Natural killer cell (primary cell): ENCODE measurements at regions of chr4 and their contacts with region 1.

Region 1: GRCh38 chr4:1746265-1746691 is 25.0 kb downstream of the TACC3 start:
- DNase-seq: peak; percentile 66 to 81
- ATAC-seq: peak; percentile 54 to 83 (median 83)
- H3K4me3 ChIP-seq: no peak overlapping the region
- H3K4me3 Mint-ChIP-seq: no peak overlapping the region
- H3K27ac ChIP-seq: no peak overlapping the region
- H3K27ac Mint-ChIP-seq: no peak overlapping the region
- H3K4me1 ChIP-seq: peaks cover 10% of the 10 kb centered on the region
- H3K4me1 Mint-ChIP-seq: no peaks in the 10 kb centered on the region
- H3K27me3 ChIP-seq: no peaks in the 10 kb centered on the region
- H3K27me3 Mint-ChIP-seq: no peaks in the 10 kb centered on the region
- CTCF ChIP-seq: peak; percentile 66

Region 2: DNA sequence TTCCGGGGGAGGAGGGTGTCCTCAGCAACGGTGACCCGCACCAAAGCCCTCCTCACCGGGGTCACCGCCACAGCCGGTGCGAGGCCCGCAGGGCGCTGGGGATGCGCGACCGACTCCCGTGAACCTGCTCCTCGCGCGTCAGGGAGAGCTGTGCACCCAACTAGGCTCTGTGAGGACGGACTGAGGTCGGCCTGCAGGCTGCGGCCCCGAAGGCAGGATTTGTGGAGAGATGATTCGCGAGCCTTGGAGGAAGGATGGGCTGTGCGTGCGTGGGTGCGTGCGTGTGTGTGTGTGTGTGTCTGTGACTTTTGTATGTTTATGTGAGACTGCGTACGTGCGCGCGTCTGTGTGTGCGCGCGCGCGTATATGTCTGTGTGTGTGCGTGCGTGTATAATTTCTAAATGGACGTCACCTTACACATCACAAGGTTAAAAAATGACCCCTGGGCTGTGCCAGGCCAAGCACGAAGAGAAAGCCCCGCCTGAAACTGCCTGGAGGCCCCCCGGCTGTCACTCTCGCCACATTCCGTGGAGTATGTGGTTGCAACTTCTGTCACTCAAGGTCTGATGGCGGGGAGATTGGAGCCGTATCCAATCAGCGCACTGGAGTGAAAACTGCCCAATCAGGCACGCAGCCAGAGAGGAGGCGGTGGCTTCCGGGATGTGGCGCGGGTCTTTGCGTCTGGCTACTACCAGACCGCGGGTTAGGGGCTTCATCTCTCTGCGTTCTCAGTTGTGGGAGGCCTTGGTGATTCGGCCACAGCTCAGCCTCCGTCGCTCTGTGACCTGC is 1408.9 kb before region 1 on chr4 and contains the start of gene ZNF141:
- intact Hi-C with region 1: no loop called
- DNase-seq: peak; percentile 88 to 96
- ATAC-seq: peak; percentile 87 to 95 (median 89)
- H3K4me3 ChIP-seq: peak within 1 kb of the TSS; percentile 97
- H3K4me3 Mint-ChIP-seq: peak within 1 kb of the TSS; percentile 100
- H3K27ac ChIP-seq: peak within 1 kb of the TSS; percentile 99
- H3K27ac Mint-ChIP-seq: peak within 1 kb of the TSS; percentile 99
- H3K4me1 ChIP-seq: peaks cover 18% of the 10 kb centered on the region
- H3K4me1 Mint-ChIP-seq: peaks cover 43 to 45% of the 10 kb centered on the region in 2 donors
- H3K27me3 ChIP-seq: no peaks in the 10 kb centered on the region
- H3K27me3 Mint-ChIP-seq: no peaks in the 10 kb centered on the region
- CTCF ChIP-seq: no peak
- total RNA-seq, gene ZNF141: 20.1 to 24.4 (median 23.6) TPM

Region 3: DNA sequence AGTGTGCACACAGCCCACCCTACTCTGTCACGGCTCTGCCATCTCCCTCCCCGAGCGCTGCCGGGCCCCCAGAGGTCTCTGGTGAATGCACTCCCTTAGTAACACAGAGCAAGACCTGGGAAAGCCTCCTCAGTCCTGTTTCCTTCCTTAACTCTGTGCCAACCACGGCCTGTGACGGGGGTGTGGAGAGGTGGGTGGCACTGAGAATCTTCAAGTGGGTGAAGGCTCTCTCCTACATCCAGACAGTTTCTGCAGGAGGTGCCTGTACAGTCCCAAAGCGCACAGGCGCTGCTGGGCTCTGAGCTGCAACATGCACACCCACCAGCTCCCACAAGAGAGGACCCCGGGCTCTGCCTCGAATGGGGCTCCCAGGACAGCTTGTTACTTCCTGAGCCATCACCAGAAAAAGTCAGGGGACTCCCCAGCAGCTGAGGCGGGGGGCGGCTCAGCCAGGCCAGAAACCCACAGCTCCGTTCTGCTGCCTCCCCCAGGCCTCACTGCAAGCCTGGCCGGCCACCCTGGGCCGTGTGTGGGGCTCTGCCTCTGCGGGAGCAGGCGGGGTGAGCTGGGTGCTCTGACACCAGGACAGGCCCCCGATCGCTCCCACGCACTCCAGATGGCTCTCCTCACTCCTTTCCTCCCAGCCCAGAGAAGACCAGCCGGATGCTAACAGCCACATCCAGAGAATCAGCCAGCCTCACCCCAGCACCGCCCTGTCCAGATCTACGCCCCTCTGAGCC is 91.9 kb before region 1 on chr4:
- intact Hi-C with region 1: no loop called
- DNase-seq: no peak
- ATAC-seq: no peak
- H3K4me3 ChIP-seq: no peak overlapping the region
- H3K4me3 Mint-ChIP-seq: no peak overlapping the region
- H3K27ac ChIP-seq: no peak overlapping the region
- H3K27ac Mint-ChIP-seq: no peak overlapping the region
- H3K4me1 ChIP-seq: no peaks in the 10 kb centered on the region
- H3K4me1 Mint-ChIP-seq: no peaks in the 10 kb centered on the region
- H3K27me3 ChIP-seq: no peaks in the 10 kb centered on the region
- H3K27me3 Mint-ChIP-seq: no peaks in the 10 kb centered on the region
- CTCF ChIP-seq: no peak

Region 4: GRCh38 chr4:1809754-1810511 is 63.7 kb after region 1 on chr4:
- intact Hi-C with region 1: loop called (anchors 10 kb)
- DNase-seq: peak; percentile 54 to 77
- ATAC-seq: peak; percentile 27 to 75 (median 62)
- H3K4me3 ChIP-seq: no peak overlapping the region
- H3K4me3 Mint-ChIP-seq: no peak overlapping the region
- H3K27ac ChIP-seq: no peak overlapping the region
- H3K27ac Mint-ChIP-seq: no peak overlapping the region
- H3K4me1 ChIP-seq: no peaks in the 10 kb centered on the region
- H3K4me1 Mint-ChIP-seq: no peaks in the 10 kb centered on the region
- H3K27me3 ChIP-seq: no peaks in the 10 kb centered on the region
- H3K27me3 Mint-ChIP-seq: no peaks in the 10 kb centered on the region
- CTCF ChIP-seq: peak; percentile 64

Region 5: DNA sequence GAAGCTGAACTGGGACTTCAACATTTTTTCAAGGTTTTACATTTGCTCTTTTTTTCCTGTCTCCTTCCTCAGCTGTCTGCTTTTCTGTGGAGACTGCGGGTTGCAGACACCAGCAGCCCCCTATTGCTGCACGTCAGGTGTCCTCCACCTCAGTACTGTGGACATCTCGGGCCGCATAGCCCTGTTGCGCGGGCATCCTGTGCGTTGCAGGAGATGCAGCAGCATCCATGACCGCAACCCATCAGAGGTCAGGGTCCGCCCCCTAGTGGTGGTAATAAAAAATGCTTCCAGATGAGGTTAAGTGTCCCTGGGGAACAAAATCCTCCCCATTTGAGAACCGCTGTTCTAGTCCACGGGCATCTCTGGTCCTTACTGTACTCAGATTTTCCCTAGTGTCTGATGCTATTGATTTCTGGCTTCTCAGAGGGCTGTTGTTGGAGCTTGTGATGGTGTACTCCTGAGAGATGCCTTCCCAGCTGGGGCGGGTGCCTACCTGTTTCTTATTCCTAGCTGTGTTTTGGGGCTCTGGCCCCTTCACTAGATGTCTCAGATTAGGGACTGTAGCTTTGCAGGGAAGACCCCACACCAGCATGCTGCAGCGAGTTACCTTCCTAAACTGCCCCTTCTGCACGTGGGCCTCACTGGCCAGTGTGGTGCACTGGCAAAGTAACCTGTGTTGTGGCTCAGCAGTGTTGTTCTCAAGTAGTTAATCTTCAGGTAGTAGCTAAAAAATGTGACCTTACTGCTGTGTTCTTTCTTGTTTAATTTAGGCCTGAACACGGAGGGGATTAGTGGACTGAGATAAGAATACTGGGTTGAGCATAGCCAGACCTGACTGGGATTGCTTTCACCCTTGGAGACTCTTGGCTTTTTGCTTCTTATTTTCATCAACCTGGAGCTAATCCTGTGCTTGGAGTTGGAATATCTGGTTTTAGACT is 153.1 kb after region 1 on chr4:
- intact Hi-C with region 1: loop called (anchors 1 kb)
- DNase-seq: peak; percentile 57 to 91
- ATAC-seq: peak; percentile 90 to 99 (median 98)
- H3K4me3 ChIP-seq: no peak overlapping the region
- H3K4me3 Mint-ChIP-seq: no peak overlapping the region
- H3K27ac ChIP-seq: no peak overlapping the region
- H3K27ac Mint-ChIP-seq: peak overlapping the region; percentile 19 to 64
- H3K4me1 ChIP-seq: peaks cover 3% of the 10 kb centered on the region
- H3K4me1 Mint-ChIP-seq: peaks cover 10 to 15% of the 10 kb centered on the region in 2 donors
- H3K27me3 ChIP-seq: no peaks in the 10 kb centered on the region
- H3K27me3 Mint-ChIP-seq: no peaks in the 10 kb centered on the region
- CTCF ChIP-seq: peak; percentile 96